ENCODE measurements at regions of chrX and their contacts with region 1.

Region 1: DNA sequence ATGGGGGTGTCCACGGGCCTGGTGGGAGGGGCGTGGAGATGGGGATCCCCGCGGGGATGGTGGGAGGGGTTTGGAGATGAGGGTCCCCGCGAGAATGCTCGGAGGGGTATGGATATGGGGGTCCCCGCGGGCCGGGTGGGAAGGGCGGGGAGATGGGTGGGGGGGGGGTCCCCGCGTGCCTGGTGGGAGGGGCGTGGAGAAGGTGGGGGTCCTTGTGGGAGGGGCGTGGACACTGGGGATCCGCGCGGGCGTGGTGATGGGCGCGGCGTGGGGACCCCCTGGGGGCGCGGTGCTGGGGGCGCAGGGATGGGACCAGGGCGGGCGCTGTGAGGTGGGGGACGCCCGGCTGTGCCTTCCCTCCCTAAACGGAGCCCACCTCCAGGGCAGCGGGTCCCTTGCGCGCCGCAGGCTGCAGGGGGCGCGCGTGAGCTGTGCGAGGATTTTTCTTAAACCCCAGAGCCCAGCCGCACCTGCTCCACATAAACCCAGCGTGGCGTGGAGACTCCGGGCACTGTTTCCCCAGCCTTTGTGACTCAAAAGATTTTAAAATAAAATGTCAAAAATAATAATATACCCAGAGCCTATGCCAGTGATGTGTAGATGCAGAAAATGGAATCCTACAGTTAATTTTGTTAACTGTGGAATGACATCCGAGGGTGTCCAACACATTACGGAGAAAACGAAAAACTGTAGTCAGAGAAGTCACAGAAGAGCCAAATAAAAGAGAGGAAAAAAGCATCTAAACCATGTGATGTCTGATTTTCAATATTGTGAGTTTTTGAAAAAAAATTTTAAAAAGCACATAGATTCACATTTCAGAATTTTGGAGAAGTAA is 1.5 kb upstream of the ASMTL start:
- DNase-seq: peak; percentile 96
- H3K4me3 Mint-ChIP-seq: peak overlapping the region; percentile 56
- H3K27ac Mint-ChIP-seq: peak overlapping the region; percentile 10
- H3K4me1 Mint-ChIP-seq: peaks cover 18% of the 10 kb centered on the region
- H3K27me3 Mint-ChIP-seq: no peaks in the 10 kb centered on the region

Region 2: GRCh38 chrX:318739-319578 is 1135.2 kb before region 1 on chrX and contains the start of gene GTPBP6:
- CTCF ChIA-PET with region 1: no interaction called
- intact Hi-C with region 1: loop called (anchors 1 kb)
- DNase-seq: peak; percentile 99
- H3K4me3 Mint-ChIP-seq: peak within 1 kb of the TSS; percentile 90
- H3K27ac Mint-ChIP-seq: peak within 1 kb of the TSS; percentile 98
- H3K4me1 Mint-ChIP-seq: peaks cover 18% of the 10 kb centered on the region
- H3K27me3 Mint-ChIP-seq: no peaks in the 10 kb centered on the region
- total RNA-seq, gene GTPBP6: 63.4 to 64.6 TPM

Region 3: DNA sequence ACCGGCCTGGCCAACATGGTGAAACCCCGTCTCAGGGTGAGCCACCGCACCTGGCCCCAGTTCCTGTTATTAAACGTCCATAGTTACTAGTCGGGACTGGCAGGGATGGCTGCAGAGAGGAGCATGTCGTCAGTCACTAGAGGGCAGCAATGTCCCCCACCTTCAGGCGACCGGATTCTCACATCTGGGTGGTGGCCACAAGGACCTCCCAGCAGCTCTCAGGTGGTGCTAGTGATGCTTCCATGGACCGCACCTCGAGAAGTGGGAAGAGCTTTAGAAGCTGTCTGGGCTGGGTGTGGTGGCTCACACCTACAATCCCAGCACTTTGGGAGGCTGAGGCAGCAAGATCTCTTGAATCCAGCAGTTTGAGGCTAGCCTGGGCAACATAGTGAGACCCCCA is 130.9 kb before region 1 on chrX:
- CTCF ChIA-PET with region 1: no interaction called
- intact Hi-C with region 1: loop called (anchors 1 kb)
- DNase-seq: peak; percentile 83
- H3K4me3 Mint-ChIP-seq: no peak overlapping the region
- H3K27ac Mint-ChIP-seq: no peak overlapping the region
- H3K4me1 Mint-ChIP-seq: peaks cover 11% of the 10 kb centered on the region
- H3K27me3 Mint-ChIP-seq: peaks cover 8% of the 10 kb centered on the region

Region 4: GRCh38 chrX:1537035-1537715 is 83.0 kb after region 1 on chrX and contains the start of gene P2RY8:
- CTCF ChIA-PET with region 1: no interaction called
- intact Hi-C with region 1: loop called (anchors 1 kb)
- DNase-seq: peak; percentile 89
- H3K4me3 Mint-ChIP-seq: peak within 1 kb of the TSS; percentile 91
- H3K27ac Mint-ChIP-seq: peak within 1 kb of the TSS; percentile 97
- H3K4me1 Mint-ChIP-seq: peaks cover 15% of the 10 kb centered on the region
- H3K27me3 Mint-ChIP-seq: no peaks in the 10 kb centered on the region
- total RNA-seq, gene P2RY8: 9.8 to 10.6 TPM

Region 5: GRCh38 chrX:1657367-1658070 is 203.4 kb after region 1 on chrX:
- CTCF ChIA-PET with region 1: no interaction called
- intact Hi-C with region 1: loop called (anchors 1 kb)
- DNase-seq: peak; percentile 87
- H3K4me3 Mint-ChIP-seq: peak overlapping the region; percentile 99
- H3K27ac Mint-ChIP-seq: peak overlapping the region; percentile 99
- H3K4me1 Mint-ChIP-seq: peaks cover 37% of the 10 kb centered on the region
- H3K27me3 Mint-ChIP-seq: no peaks in the 10 kb centered on the region

Region 6: GRCh38 chrX:2627272-2627867 is 1173.2 kb after region 1 on chrX:
- CTCF ChIA-PET with region 1: no interaction called
- intact Hi-C with region 1: loop called (anchors 5 kb)
- DNase-seq: peak; percentile 74
- H3K4me3 Mint-ChIP-seq: no peak overlapping the region
- H3K27ac Mint-ChIP-seq: peak overlapping the region; percentile 27
- H3K4me1 Mint-ChIP-seq: peaks cover 40% of the 10 kb centered on the region
- H3K27me3 Mint-ChIP-seq: no peaks in the 10 kb centered on the region